ENCODE measurements at regions of chr12 and their contacts with region 1.

Region 1: DNA sequence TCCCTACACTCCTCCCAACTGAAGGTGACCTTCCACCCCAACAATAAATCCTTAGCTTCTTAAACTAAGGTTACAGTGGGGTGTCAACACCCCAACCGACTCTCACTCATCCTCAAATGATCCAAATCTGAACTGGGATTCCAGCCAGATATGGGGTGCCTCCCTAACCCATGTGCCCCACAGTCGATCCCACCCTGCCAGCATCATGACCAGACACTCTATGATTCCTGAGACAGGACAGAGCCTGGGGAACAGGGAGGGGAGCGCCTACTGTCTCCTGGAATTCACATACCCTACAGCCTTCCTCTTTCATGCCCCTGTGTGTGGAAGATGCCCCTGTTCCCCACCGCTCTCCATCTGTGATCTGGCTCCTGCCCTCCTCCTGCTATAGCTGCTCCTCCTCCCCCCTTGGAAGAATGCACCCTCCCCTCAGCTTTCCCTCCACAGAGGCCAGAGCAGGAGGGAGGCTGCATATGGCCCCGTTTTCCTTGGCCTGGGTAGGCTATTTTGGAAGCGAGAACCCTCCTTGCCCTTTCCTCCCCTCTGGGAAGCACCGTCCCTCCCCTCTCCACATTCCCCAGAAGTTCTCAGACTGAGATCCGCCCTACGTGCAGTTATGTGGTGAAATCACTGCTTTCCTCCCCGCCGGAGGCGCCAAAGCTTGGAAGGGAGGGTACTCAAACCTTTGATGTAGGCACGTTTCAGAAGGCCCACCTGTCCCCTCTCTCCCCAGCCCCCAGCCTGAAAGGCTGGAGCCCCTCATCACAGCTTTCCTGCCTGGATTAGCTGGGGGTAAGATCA is 48.0 kb downstream of the SMUG1 start:
- DNase-seq: peak in 1 of 2 donors; percentile 87
- H3K4me3 ChIP-seq: peak overlapping the region in 1 of 2 donors; percentile 27
- H3K27ac ChIP-seq: peak overlapping the region; percentile 82 to 88
- H3K4me1 ChIP-seq: peaks cover 4 to 19% of the 10 kb centered on the region in 2 donors
- H3K27me3 ChIP-seq: no peaks in the 10 kb centered on the region
- CTCF ChIP-seq: no peak

Region 2: DNA sequence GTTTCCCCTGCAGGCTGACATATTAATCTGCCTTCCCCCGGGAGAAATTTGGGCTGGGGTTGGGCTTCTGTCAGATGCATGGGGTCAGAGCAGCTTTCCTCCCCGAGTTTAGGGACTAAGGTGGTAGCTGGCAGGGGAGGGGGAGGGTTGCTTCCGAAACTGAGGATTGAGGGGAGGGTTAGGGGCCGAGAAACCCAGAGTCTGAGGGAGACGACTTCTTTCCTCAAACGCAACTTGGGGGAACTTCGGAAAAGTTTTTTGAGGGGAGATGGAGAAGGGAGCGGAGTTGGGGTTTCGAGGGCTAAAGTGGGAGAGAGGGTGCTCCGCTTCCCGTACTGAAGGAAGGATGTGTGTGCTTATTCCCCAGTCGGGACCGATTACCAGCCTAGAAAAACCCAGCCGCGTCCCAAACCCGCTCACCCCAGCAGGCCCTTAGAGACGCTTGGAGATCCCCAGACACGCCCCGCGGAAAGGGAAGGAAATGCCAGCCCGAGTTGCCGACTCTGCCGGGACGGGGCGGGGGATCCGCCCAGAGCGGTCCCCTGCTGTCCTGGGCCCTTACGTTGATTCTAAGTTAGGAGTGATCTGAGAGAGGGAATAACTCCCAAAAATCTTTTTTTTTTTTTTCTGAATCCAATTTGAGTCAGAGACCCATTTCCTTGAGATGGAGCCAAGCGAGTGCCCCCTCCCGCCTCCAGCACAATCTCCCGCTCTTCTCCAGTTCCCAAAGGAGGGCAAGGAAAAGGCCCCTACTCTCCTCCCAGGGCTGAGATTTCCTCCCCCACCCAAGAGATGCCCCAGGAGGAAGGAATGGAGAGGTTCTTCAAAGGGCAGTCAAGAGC is 13.9 kb before region 1 on chr12:
- intact Hi-C with region 1: loop called (anchors 2 kb)
- DNase-seq: peak in 1 of 2 donors; percentile 92
- H3K4me3 ChIP-seq: peak overlapping the region; percentile 83 to 94
- H3K27ac ChIP-seq: peak overlapping the region; percentile 71 to 92
- H3K4me1 ChIP-seq: peaks cover 8 to 10% of the 10 kb centered on the region in 2 donors
- H3K27me3 ChIP-seq: no peaks in the 10 kb centered on the region
- CTCF ChIP-seq: no peak

Measured in ascending aorta (tissue), 2 donors.